HepG2 (cell line): ENCODE measurements at regions of chr15 and their contacts with region 1.

Region 1: GRCh38 chr15:74489518-74490338 is 28.8 kb upstream of the UBL7 start:
- DNase-seq: peak; percentile 39
- ATAC-seq: peak; percentile 83
- H3K4me3 ChIP-seq: no peak overlapping the region
- H3K27ac ChIP-seq: no peak overlapping the region
- H3K4me1 ChIP-seq: no peaks in the 10 kb centered on the region
- H3K27me3 ChIP-seq: no peaks in the 10 kb centered on the region
- CTCF ChIP-seq: peak; percentile 81
- EP300 ChIP-seq: no peak
- POLR2A ChIP-seq: no peak
- RAD21 ChIP-seq: peak; percentile 64; the same call in 1 of the 2 replicates

Region 2: GRCh38 chr15:74382004-74382816 is 107.5 kb before region 1 on chr15:
- CTCF ChIA-PET with region 1: interaction called, 27 read pairs
- POLR2A ChIA-PET with region 1: interaction called, 4 read pairs
- in situ Hi-C with region 1: loop called (anchors 5 kb)
- intact Hi-C with region 1: loop called (anchors 2 kb)
- DNase-seq: peak; percentile 74
- ATAC-seq: peak; percentile 92
- H3K4me3 ChIP-seq: peak overlapping the region in 2 of 3 experiments; percentile 26 to 53; a peak in 2 of 6 replicates
- H3K27ac ChIP-seq: no peak overlapping the region
- H3K4me1 ChIP-seq: peaks cover 66% of the 10 kb centered on the region
- H3K27me3 ChIP-seq: peaks cover 0 to 19% of the 10 kb centered on the region in 2 experiments; a peak in 3 of 5 replicates
- CTCF ChIP-seq: peak; percentile 98
- EP300 ChIP-seq: no peak
- POLR2A ChIP-seq: no peak
- RAD21 ChIP-seq: peak; percentile 99